ENCODE measurements at regions of chr3 and their contacts with region 1.

Region 1: GRCh38 chr3:136075218-136075808 is 109.8 kb downstream of the PPP2R3A start:
- DNase-seq: peak; percentile 53
- H3K4me3 ChIP-seq: no peak overlapping the region
- H3K27ac ChIP-seq: no peak overlapping the region
- H3K4me1 ChIP-seq: peaks cover 16% of the 10 kb centered on the region
- H3K27me3 ChIP-seq: no peaks in the 10 kb centered on the region
- CTCF ChIP-seq: peak; percentile 90 to 96

Region 2: GRCh38 chr3:135706758-135707375 is 368.4 kb before region 1 on chr3:
- CTCF ChIA-PET with region 1: no interaction called
- dilution Hi-C with region 1: no loop called
- in situ Hi-C with region 1: no loop called
- intact Hi-C with region 1: no loop called
- DNase-seq: peak; percentile 21
- H3K4me3 ChIP-seq: no peak overlapping the region
- H3K27ac ChIP-seq: no peak overlapping the region
- H3K4me1 ChIP-seq: no peaks in the 10 kb centered on the region
- H3K27me3 ChIP-seq: no peaks in the 10 kb centered on the region
- CTCF ChIP-seq: no peak

Region 3: GRCh38 chr3:136177876-136178275 is 102.6 kb after region 1 on chr3:
- CTCF ChIA-PET with region 1: no interaction called
- dilution Hi-C with region 1: no loop called
- in situ Hi-C with region 1: no loop called
- intact Hi-C with region 1: loop called (anchors 2 kb)
- DNase-seq: no peak
- H3K4me3 ChIP-seq: no peak overlapping the region
- H3K27ac ChIP-seq: no peak overlapping the region
- H3K4me1 ChIP-seq: peaks cover 4% of the 10 kb centered on the region
- H3K27me3 ChIP-seq: no peaks in the 10 kb centered on the region
- CTCF ChIP-seq: no peak

Region 4: GRCh38 chr3:136250226-136250902 is 175.1 kb after region 1 on chr3 and contains the start of gene PCCB:
- CTCF ChIA-PET with region 1: no interaction called
- dilution Hi-C with region 1: no loop called
- in situ Hi-C with region 1: no loop called
- intact Hi-C with region 1: loop called (anchors 1 kb)
- DNase-seq: peak; percentile 95
- H3K4me3 ChIP-seq: peak within 1 kb of the TSS; percentile 63 to 74 (median 71)
- H3K27ac ChIP-seq: peak within 1 kb of the TSS; percentile 39
- H3K4me1 ChIP-seq: peaks cover 13% of the 10 kb centered on the region
- H3K27me3 ChIP-seq: no peaks in the 10 kb centered on the region
- CTCF ChIP-seq: peak; percentile 40 to 89
- total RNA-seq, gene PCCB: 29.7 to 35.5 TPM

Region 5: GRCh38 chr3:136350132-136350531 is 274.8 kb after region 1 on chr3:
- CTCF ChIA-PET with region 1: interaction called, 5 read pairs
- dilution Hi-C with region 1: no loop called
- in situ Hi-C with region 1: no loop called
- intact Hi-C with region 1: loop called (anchors 10 kb)
- DNase-seq: peak; percentile 83
- H3K4me3 ChIP-seq: no peak overlapping the region
- H3K27ac ChIP-seq: peak overlapping the region; percentile 34
- H3K4me1 ChIP-seq: peaks cover 10% of the 10 kb centered on the region
- H3K27me3 ChIP-seq: no peaks in the 10 kb centered on the region
- CTCF ChIP-seq: no peak

Region 6: DNA sequence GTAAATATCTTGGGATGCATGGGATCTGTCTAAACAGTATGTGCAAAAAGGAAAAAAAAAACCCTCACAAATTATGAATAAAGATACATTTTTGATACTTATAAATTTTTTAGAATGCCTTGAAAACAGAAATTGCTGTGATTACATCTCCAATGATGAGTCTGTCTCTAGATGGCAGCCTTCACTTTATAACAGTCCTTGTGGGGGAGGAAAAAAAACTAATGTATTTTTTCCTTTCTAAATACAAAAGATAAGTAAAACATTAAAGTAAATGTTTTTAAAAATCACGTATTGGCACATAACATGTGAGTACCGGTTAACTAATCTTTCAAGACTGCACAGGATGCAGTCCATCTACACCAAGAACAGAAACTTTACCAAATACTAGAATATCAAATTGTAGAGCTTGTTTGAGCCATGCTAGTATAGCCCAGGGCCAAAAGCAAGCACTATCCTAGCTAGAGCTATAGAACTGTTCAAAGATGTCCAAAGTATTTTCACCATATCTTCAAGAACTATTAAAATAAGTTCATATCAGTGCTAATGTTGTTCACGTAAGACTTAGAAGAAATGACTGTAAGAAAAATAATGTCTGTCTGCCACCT is 470.5 kb after region 1 on chr3:
- CTCF ChIA-PET with region 1: no interaction called
- dilution Hi-C with region 1: no loop called
- in situ Hi-C with region 1: no loop called
- intact Hi-C with region 1: loop called (anchors 5 kb)
- DNase-seq: no peak
- H3K4me3 ChIP-seq: no peak overlapping the region
- H3K27ac ChIP-seq: no peak overlapping the region
- H3K4me1 ChIP-seq: peaks cover 6% of the 10 kb centered on the region
- H3K27me3 ChIP-seq: no peaks in the 10 kb centered on the region
- CTCF ChIP-seq: peak in 1 of 2 donors; percentile 37